ENCODE measurements at regions of chr12 and their contacts with region 1.

Region 1: DNA sequence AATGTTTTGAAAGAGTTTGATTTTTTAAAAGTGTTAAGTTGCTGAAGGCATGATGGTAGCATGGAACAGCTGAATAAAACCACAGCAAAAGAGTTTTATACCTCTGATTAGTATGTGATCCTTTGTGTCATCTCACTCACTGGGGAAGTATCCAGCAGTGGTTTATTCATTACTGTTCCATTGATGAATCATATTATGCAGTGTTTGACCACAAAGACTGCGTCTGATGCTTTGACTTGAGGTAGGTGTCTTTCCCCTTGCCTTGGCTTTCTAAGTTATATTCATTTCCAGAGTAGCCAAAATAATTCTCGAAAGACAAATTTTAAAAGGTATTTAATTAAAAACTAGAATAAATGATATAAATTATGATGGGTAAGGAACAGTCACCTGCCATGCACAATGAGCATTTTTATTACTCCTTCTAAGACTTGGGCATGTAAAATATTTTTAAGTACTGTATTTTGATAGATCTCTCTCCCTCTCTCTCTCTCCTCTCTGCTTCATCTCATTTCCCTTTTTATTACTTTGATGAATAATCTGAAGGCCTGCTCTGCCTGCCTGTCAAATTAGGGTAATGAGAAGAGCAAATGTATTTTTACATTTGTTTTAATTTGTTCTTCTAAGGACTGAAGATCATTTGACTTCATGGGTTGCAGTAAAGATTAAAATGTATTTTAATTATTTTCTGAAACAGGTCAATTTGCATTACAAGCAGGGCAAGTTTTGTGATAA is 164.9 kb downstream of the NAV3 start:
- DNase-seq: no peak
- H3K4me3 ChIP-seq: no peak overlapping the region
- H3K27ac ChIP-seq: no peak overlapping the region
- H3K4me1 ChIP-seq: peaks cover 45% of the 10 kb centered on the region
- CTCF ChIP-seq: no peak

Region 2: GRCh38 chr12:78120866-78121560 is 125.4 kb after region 1 on chr12:
- CTCF ChIA-PET with region 1: no interaction called
- POLR2A ChIA-PET with region 1: interaction called, 4 read pairs
- intact Hi-C with region 1: loop called (anchors 1 kb)
- DNase-seq: peak; percentile 54
- H3K4me3 ChIP-seq: no peak overlapping the region
- H3K27ac ChIP-seq: no peak overlapping the region
- H3K4me1 ChIP-seq: no peaks in the 10 kb centered on the region
- CTCF ChIP-seq: peak; percentile 82

Region 3: GRCh38 chr12:78185109-78185508 is 189.5 kb after region 1 on chr12:
- CTCF ChIA-PET with region 1: no interaction called
- POLR2A ChIA-PET with region 1: no interaction called
- intact Hi-C with region 1: no loop called
- DNase-seq: no peak
- H3K4me3 ChIP-seq: no peak overlapping the region
- H3K27ac ChIP-seq: no peak overlapping the region
- H3K4me1 ChIP-seq: no peaks in the 10 kb centered on the region
- CTCF ChIP-seq: no peak

Measured in OCI-LY7 (cell line).